ENCODE measurements at regions of chr11 and their contacts with region 1.

Region 1: DNA sequence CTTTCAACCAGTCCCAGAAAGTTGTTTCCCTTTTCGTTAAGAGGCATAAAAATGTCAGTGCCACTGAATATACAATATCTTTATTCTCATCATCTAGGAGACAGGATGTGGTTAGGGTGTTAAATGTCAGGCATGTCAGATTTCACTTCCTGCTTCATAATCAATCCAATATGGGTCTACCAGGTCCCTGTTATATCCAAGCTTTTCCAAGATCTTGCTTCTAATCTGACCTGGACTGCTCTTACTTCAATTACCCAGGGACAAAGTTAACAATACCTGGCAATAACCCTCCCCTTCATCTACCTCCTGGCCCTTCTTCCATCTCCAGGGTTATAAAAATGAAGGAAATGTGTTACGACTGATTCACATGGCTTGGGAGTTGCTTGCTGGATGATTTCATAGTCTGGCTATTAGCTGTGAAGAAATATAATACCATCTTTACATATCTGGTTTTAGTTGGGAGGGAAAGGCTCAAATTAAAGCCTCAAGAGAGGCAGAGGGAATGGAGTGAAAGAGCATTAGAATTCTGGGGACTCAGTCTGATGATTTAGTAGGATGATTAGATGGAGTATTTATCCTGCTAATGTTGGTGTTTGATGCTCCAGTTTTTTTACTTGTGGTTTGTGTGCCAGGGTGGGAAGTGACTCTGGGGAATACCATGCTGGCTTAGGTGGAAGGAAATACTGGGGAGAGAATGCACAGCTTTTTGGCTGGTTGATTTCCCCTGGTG is 534.3 kb downstream of the ETS1 start:
- DNase-seq: no peak
- H3K4me3 Mint-ChIP-seq: peak overlapping the region; percentile 70
- H3K27ac Mint-ChIP-seq: peak overlapping the region; percentile 94
- H3K4me1 Mint-ChIP-seq: peaks cover 67% of the 10 kb centered on the region
- H3K27me3 Mint-ChIP-seq: no peaks in the 10 kb centered on the region

Region 2: DNA sequence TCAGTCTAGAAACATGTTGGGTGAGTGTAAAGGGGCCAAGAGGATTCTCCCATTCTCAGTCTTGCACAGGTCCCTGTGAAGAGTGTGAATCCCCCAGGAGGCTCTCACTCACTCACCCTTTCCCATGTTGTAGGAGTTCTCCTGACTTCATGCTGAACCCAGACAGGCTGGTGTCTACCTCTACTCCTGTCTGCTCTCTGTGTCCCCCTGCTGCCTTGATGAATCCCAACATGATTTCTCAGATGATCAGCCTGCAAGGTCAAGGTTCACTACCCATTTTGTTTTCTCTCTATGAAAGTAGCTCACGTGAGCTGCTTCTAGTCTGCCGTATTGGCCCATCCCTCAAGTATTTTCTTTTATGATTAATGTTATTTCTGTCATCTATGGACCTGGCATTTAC is 33.7 kb after region 1 on chr11:
- CTCF ChIA-PET with region 1: no interaction called
- POLR2A ChIA-PET with region 1: no interaction called
- intact Hi-C with region 1: loop called (anchors 2 kb)
- DNase-seq: no peak
- H3K4me3 Mint-ChIP-seq: no peak overlapping the region
- H3K27ac Mint-ChIP-seq: no peak overlapping the region
- H3K4me1 Mint-ChIP-seq: peaks cover 49% of the 10 kb centered on the region
- H3K27me3 Mint-ChIP-seq: no peaks in the 10 kb centered on the region

Region 3: DNA sequence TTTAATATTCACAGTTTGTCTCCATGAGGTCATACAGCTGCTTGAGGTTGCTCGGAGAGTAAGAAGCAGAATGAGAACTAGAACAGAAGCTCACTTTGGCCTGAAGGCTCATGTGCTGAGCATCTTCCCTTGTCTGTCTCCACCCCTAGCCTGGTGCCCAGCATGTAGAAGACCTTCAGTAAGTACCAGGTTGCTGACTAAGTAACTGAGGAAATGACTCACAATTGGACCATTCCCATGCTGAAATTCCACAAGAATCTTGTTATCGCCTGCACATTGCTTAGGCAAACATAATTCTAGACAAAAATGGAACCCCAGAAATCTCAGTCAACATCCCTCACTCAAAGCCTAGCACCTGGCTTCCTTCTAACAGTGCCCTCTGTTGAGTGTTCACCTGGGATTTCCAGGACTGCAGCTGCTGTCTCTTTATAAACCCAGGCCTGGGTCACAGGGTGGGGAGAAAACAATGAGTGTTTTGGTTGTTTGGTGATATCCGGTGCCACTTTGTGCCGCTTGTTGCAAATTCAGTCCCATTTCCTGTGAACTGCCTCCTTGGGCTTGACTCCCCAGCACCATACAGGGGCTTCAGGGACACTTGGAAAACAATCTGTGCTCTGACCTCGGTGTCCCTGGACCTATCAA is 127.5 kb after region 1 on chr11:
- CTCF ChIA-PET with region 1: no interaction called
- POLR2A ChIA-PET with region 1: no interaction called
- intact Hi-C with region 1: no loop called
- DNase-seq: no peak
- H3K4me3 Mint-ChIP-seq: no peak overlapping the region
- H3K27ac Mint-ChIP-seq: no peak overlapping the region
- H3K4me1 Mint-ChIP-seq: peaks cover 9% of the 10 kb centered on the region
- H3K27me3 Mint-ChIP-seq: no peaks in the 10 kb centered on the region

Region 4: DNA sequence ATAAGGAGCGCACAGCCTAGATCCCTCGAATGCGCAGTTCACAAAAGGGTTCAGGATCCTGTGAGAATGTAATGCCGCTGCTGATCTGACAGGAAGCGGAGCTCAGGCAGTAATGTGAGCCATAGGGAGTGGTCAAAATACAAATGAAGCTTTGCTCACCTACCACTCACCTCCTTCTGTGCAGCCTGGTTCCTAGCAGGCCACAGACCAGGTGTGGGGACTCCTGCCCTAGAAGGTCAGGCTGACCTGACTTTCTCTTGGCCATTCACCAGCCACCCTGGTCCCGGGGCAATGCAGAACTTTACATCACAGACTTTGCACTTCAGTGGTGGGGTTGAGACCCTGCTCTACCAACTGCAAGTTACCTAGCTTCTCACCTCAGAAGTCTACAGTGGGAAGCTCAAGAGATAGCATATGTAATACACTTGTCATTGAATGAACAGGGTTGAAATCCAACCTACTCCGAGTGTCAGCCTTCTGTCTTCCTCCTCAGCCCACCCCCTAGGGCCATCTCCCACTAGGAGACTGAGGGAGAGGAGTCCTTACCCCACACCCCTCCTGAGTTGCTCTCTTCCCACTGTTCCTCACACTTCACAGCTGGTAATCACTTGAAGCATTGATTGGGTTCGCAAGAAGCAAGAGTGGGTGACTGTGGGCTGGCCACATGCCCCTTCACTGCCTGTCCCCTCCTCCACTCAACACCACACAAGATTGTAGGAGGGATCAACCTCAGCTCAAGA is 815.9 kb after region 1 on chr11:
- CTCF ChIA-PET with region 1: no interaction called
- POLR2A ChIA-PET with region 1: no interaction called
- intact Hi-C with region 1: loop called (anchors 5 kb)
- DNase-seq: peak; percentile 44
- H3K4me3 Mint-ChIP-seq: no peak overlapping the region
- H3K27ac Mint-ChIP-seq: no peak overlapping the region
- H3K4me1 Mint-ChIP-seq: no peaks in the 10 kb centered on the region
- H3K27me3 Mint-ChIP-seq: no peaks in the 10 kb centered on the region